ENCODE measurements at regions of chr15 and their contacts with region 1.

Region 1: GRCh38 chr15:33700695-33701304 is 267.5 kb upstream of the CHRM5 start:
- DNase-seq: no peak
- H3K4me3 ChIP-seq: no peak overlapping the region
- H3K27me3 ChIP-seq: peaks cover 8% of the 10 kb centered on the region
- CTCF ChIP-seq: peak; percentile 96

Region 2: GRCh38 chr15:33234014-33234461 is 466.8 kb before region 1 on chr15:
- CTCF ChIA-PET with region 1: interaction called, 22 read pairs
- POLR2A ChIA-PET with region 1: no interaction called
- DNase-seq: no peak
- H3K4me3 ChIP-seq: no peak overlapping the region
- H3K27me3 ChIP-seq: peaks cover 8% of the 10 kb centered on the region
- CTCF ChIP-seq: peak; percentile 56

Region 3: DNA sequence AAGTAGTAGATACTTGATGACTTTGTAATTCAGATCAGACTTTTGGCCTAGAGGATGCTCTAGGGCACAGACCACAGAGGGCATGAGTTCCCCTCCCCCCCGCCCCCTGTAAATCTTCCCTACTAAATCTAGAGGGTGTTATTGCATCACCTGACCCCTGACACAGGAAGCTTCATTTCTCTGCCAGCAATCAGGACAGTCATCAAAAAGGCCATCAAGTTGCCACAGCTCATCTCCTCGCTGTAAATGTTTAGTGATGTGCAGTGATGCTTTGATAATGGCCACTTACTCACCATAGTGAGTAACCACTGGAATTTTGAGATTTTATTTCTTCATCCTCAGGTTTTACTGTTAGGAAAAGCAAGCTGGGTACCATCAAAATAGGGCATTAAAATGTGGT is 21.7 kb before region 1 on chr15:
- CTCF ChIA-PET with region 1: interaction called, 14 read pairs
- POLR2A ChIA-PET with region 1: no interaction called
- DNase-seq: no peak
- H3K4me3 ChIP-seq: no peak overlapping the region
- H3K27me3 ChIP-seq: peaks cover 3% of the 10 kb centered on the region
- CTCF ChIP-seq: no peak

Region 4: GRCh38 chr15:33722005-33722672 is 21.3 kb after region 1 on chr15:
- CTCF ChIA-PET with region 1: interaction called, 38 read pairs
- POLR2A ChIA-PET with region 1: no interaction called
- DNase-seq: peak; percentile 31
- H3K4me3 ChIP-seq: no peak overlapping the region
- H3K27me3 ChIP-seq: no peaks in the 10 kb centered on the region
- CTCF ChIP-seq: no peak